ENCODE measurements at regions of chr1 and their contacts with region 1.

Region 1: DNA sequence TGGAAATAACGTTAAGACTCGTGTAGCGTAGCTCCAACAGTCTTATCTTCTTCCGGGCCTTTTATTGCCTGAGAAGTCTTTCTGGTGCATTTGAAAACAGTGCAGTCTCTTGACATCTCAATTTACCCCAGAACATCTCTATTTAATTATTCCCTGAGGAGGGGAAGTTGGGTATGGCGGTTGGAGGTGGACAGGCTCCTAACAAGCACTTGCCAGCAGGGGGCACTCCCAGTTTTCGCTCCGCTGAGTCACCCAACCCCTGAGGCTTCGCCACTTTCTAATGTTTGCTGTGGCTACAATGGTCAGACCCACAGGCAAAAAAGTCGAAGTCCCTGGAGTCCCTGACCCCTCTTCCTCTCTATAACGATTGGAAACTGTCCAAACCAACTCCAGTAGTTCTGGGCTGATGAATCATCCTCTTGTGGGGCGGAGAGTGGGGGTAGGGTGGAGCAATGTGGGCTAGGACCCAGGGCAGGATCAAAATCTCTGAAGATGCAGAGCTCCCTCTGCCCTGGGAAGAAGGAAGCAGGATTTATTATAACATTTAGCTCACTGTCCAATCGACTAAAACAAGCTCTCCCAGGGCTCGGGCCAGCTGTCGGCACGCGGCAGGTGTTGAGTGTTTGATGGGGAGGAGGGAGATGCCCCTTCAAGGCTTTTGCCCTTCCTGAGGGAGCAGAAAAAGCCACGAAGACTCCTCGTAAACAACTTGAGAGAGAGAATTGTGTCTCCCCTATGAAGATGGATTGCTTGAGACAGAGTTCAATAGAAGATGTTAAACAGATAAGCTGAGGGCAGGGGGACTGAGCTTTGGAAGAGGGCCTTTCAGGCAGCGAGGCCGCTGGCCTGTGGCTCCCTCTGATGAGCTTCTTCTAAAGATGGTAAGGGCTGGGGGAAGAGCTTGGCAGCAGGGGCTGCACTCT is 85.7 kb downstream of the BRINP2 start:
- DNase-seq: peak; percentile 53
- H3K4me3 ChIP-seq: no peak overlapping the region
- H3K27ac ChIP-seq: no peak overlapping the region
- H3K4me1 ChIP-seq: peaks cover 8% of the 10 kb centered on the region
- H3K27me3 ChIP-seq: no peaks in the 10 kb centered on the region
- CTCF ChIP-seq: peak; percentile 42 to 45
- POLR2A ChIP-seq: no peak

Region 2: DNA sequence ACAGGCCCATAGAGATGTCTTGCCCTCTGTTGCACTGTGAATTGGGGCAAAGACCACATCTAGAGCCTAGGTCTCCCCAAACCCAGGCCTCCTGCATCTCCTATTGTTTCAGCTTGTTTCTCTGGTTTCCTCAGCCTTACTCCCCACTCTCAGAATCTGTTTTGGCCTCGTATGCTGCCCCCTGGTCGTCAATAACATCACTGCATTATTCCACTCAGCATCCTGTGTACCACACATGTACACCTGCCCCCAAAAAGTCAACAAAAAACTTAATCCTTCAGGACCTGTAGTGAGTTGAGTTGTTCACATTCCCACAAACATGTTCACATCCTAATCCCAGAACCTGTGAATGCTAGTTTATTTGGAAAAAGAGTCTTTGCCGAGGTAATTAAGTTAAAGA is 99.2 kb after region 1 on chr1:
- CTCF ChIA-PET with region 1: interaction called, 3 read pairs
- POLR2A ChIA-PET with region 1: no interaction called
- dilution Hi-C with region 1: no loop called
- intact Hi-C with region 1: loop called (anchors 1 kb)
- DNase-seq: peak; percentile 6
- H3K4me3 ChIP-seq: no peak overlapping the region
- H3K27ac ChIP-seq: no peak overlapping the region
- H3K4me1 ChIP-seq: no peaks in the 10 kb centered on the region
- H3K27me3 ChIP-seq: no peaks in the 10 kb centered on the region
- CTCF ChIP-seq: peak; percentile 12 to 21
- POLR2A ChIP-seq: no peak

Region 3: DNA sequence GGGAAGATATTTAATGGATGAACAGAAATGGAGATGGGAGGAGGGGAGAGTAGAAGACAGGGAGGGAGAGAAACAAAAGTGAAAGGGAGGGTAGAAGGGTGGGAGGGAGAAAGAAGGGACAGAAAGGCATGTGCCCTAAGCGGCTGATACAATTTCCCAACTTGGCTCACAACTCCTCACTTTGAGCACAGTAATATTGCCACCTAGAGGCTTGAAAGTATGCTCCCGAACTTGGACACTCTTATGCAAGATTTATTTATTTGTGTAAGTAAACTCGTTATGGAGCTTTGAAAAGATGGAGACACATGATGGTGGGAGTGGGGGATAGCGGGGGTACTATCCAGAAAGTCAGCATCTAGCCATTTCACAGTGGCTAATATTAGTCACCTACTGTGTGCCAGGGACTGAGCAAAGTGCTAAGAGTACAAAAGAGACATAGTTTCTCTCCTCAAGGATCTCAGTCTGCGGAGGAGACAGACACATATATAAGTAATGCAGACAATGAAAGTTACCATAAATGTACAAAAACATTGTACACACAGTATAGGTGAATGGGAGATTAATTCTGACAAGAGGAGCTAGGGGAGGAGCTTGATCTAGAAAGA is 523.8 kb after region 1 on chr1:
- CTCF ChIA-PET with region 1: no interaction called
- POLR2A ChIA-PET with region 1: no interaction called
- dilution Hi-C with region 1: no loop called
- intact Hi-C with region 1: loop called (anchors 1 kb)
- DNase-seq: peak; percentile 45
- H3K4me3 ChIP-seq: no peak overlapping the region
- H3K27ac ChIP-seq: no peak overlapping the region
- H3K4me1 ChIP-seq: peaks cover 4% of the 10 kb centered on the region
- H3K27me3 ChIP-seq: no peaks in the 10 kb centered on the region
- CTCF ChIP-seq: peak in 1 of 2 donors; percentile 19
- POLR2A ChIP-seq: no peak